GM12878 (cell line): ENCODE measurements at regions of chr11 and their contacts with region 1.

Region 1: GRCh38 chr11:10770626-10771254 is 19.7 kb downstream of the CTR9 start:
- DNase-seq: no peak
- ATAC-seq: peak; percentile 84
- H3K4me3 ChIP-seq: no peak overlapping the region
- H3K27ac ChIP-seq: no peak overlapping the region
- H3K4me1 ChIP-seq: no peaks in the 10 kb centered on the region
- H3K27me3 ChIP-seq: no peaks in the 10 kb centered on the region
- CTCF ChIP-seq: peak; percentile 62 to 79 (median 69)
- EP300 ChIP-seq: no peak
- POLR2A ChIP-seq: no peak
- RAD21 ChIP-seq: peak; percentile 29

Region 2: DNA sequence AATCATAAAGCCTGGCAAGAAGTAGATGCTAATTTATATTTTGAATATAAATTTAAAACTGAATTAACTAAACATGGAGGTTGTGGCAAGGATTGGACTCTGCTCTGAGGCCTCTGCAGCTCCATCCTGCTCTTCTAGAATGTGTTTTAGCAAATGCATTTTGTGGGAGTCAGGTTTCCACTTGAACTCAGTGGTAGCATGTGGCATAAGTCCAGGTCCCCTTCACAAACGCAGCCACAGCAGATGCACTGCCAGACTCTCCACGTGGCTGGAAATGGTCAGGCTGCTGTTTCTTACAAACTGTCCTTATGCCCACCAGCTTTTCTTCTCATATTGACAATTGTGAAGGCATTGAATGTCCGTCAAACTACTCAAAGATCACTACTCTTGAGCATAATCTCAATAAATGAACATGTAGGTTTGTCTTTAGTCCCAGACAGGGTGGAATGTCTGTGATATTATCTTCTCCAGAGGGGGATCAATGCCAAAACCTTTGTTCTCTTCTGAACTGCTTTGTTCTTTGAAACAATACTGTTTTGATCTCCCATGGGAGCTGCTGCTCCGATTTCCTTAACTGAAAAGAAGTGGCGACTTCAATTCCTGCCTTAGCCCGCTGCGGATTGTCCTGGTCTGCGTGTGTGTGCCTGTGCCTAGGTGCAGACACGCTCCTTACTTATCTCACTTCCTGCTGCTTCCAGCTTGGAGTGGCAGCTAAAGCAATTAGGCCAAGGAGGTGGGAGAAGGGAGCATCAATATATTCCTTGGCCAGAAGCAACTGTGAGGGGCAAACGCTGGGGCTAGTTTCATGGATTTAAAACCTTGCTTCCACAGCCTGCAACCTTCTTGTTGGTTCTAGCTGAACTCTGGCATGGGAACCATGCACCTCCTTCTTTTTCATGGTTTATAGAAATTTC is 13.7 kb after region 1 on chr11:
- CTCF ChIA-PET with region 1: interaction called, 61 read pairs
- POLR2A ChIA-PET with region 1: interaction called, 4 read pairs
- RAD21 ChIA-PET with region 1: no interaction called
- SMC1A ChIA-PET with region 1: interaction called, 6 read pairs
- in situ Hi-C with region 1: no loop called
- intact Hi-C with region 1: no loop called
- DNase-seq: no peak
- ATAC-seq: no peak
- H3K4me3 ChIP-seq: no peak overlapping the region
- H3K27ac ChIP-seq: no peak overlapping the region
- H3K4me1 ChIP-seq: no peaks in the 10 kb centered on the region
- H3K27me3 ChIP-seq: no peaks in the 10 kb centered on the region
- CTCF ChIP-seq: no peak
- EP300 ChIP-seq: no peak
- POLR2A ChIP-seq: no peak
- RAD21 ChIP-seq: no peak

Region 3: DNA sequence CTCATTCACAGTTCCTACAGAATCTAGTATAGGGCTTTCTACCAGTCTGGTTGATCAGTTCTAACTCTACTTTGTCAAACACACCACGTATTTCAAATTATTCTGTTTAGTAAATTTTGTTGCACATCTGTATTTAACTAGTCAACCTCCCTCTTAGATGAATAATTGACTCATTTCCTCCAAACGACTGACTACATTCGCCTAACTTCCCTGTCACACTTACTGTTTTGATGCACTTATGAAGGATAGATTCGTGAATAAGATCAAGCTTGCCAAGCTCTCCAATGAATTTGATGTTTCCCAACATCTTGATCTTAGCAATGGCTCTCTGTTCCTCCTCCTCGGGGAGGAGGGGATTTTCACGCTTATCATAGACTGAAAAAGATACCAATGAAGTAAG is 32.9 kb after region 1 on chr11:
- CTCF ChIA-PET with region 1: interaction called, 24 read pairs
- POLR2A ChIA-PET with region 1: no interaction called
- RAD21 ChIA-PET with region 1: interaction called, 3 read pairs
- SMC1A ChIA-PET with region 1: interaction called, 5 read pairs
- in situ Hi-C with region 1: no loop called
- intact Hi-C with region 1: no loop called
- DNase-seq: no peak
- ATAC-seq: no peak
- H3K4me3 ChIP-seq: no peak overlapping the region
- H3K27ac ChIP-seq: no peak overlapping the region
- H3K4me1 ChIP-seq: peaks cover 10% of the 10 kb centered on the region; the same call in 1 of the 2 replicates
- H3K27me3 ChIP-seq: no peaks in the 10 kb centered on the region
- CTCF ChIP-seq: no peak
- EP300 ChIP-seq: no peak
- POLR2A ChIP-seq: no peak
- RAD21 ChIP-seq: no peak